Activated CD4-positive, alpha-beta T cell treated with anti-CD3 and anti-CD28 coated beads, Interleukin-2, amount 10 ng/mL, durations not matched to agents 24 days and 14 days (primary cell): ENCODE measurements at regions of chr6 and their contacts with region 1.

Region 1: GRCh38 chr6:1554476-1555310 is 55.0 kb upstream of the FOXC1 start:
- DNase-seq: peak; percentile 90
- H3K4me3 Mint-ChIP-seq: peak overlapping the region; percentile 86
- H3K27ac Mint-ChIP-seq: peak overlapping the region; percentile 77
- H3K4me1 Mint-ChIP-seq: peaks cover 16% of the 10 kb centered on the region
- H3K27me3 Mint-ChIP-seq: peaks cover 33% of the 10 kb centered on the region

Region 2: DNA sequence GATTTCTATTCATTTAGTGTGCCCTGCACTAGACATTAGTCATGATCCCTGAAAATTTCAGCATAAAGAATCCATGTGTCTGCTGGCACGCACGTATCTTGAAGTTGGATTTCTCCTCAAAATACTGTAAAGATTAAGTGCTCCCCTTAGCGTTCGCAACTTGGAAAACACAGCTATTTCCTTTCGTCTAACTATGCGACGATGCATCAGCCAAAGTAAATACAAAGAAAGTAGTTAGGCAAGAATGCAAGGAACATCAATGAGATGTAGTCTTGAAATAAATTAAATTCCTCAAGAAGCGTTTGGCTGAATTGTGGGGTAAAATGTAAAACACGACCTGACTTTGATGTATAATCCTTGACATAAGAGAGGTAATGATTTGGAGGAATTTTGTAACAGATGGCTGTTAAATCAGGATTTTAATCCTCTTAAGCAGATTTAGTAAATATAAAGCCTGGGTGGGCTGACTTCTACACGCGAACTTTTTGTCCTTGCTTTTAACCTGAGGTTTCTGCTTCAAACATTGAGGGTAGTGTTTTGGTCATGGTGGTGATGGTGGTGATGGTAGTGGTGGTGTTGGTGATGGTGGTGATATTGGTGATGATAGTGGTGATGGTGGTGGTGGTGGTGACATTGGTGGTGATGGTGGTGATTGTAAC is 77.1 kb before region 1 on chr6:
- intact Hi-C with region 1: no loop called
- DNase-seq: no peak
- H3K4me3 Mint-ChIP-seq: no peak overlapping the region
- H3K27ac Mint-ChIP-seq: no peak overlapping the region
- H3K4me1 Mint-ChIP-seq: no peaks in the 10 kb centered on the region
- H3K27me3 Mint-ChIP-seq: peaks cover 13% of the 10 kb centered on the region

Region 3: GRCh38 chr6:1524040-1524480 is 30.6 kb before region 1 on chr6:
- intact Hi-C with region 1: loop called (anchors 2 kb)
- DNase-seq: peak; percentile 94
- H3K4me3 Mint-ChIP-seq: peak overlapping the region; percentile 69
- H3K27ac Mint-ChIP-seq: peak overlapping the region; percentile 74
- H3K4me1 Mint-ChIP-seq: peaks cover 42% of the 10 kb centered on the region
- H3K27me3 Mint-ChIP-seq: peaks cover 19% of the 10 kb centered on the region

Region 4: GRCh38 chr6:1624851-1625781 is 70.4 kb after region 1 on chr6:
- intact Hi-C with region 1: no loop called
- DNase-seq: peak; percentile 69
- H3K4me3 Mint-ChIP-seq: peak overlapping the region; percentile 72
- H3K27ac Mint-ChIP-seq: no peak overlapping the region
- H3K4me1 Mint-ChIP-seq: peaks cover 6% of the 10 kb centered on the region
- H3K27me3 Mint-ChIP-seq: peaks cover 65% of the 10 kb centered on the region